ENCODE measurements at regions of chr7 and their contacts with region 1.

Region 1: GRCh38 chr7:121530227-121531174 is 134.4 kb upstream of the FAM3C start:
- DNase-seq: peak; percentile 92
- ATAC-seq: peak; percentile 99
- H3K4me3 Mint-ChIP-seq: peak overlapping the region; percentile 36
- H3K27ac Mint-ChIP-seq: peak overlapping the region; percentile 90
- H3K4me1 Mint-ChIP-seq: peaks cover 52% of the 10 kb centered on the region
- H3K27me3 Mint-ChIP-seq: no peaks in the 10 kb centered on the region

Region 2: DNA sequence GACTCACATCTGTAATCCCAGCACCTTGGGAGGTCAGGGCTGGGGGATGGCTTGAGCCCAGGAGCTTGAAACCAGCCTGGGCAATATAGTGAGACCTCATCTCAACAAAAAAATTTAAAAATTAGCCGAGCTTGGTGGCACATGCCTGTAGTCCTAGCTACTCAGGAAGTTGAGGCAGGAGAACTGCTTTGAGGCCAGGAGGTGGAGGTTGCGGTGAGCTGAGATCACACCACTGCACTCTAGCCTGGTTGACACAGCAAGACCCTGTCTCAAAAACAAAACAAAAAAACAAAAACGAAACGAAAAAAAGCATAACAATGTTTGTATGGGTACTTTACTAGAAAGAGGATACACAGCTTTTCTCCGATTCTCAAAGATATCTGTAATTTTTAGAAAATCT is 169.9 kb before region 1 on chr7:
- CTCF ChIA-PET with region 1: interaction called, 12 read pairs
- DNase-seq: peak; percentile 81
- ATAC-seq: peak; percentile 85
- H3K4me3 Mint-ChIP-seq: no peak overlapping the region
- H3K27ac Mint-ChIP-seq: peak overlapping the region; percentile 73
- H3K4me1 Mint-ChIP-seq: peaks cover 23% of the 10 kb centered on the region
- H3K27me3 Mint-ChIP-seq: no peaks in the 10 kb centered on the region